ENCODE measurements at regions of chr1 and their contacts with region 1.

Region 1: GRCh38 chr1:168603501-168604110 is 27.2 kb downstream of the XCL1 start:
- DNase-seq: peak; percentile 54
- H3K4me3 ChIP-seq: no peak overlapping the region
- H3K27ac ChIP-seq: no peak overlapping the region
- H3K4me1 ChIP-seq: no peaks in the 10 kb centered on the region
- H3K27me3 ChIP-seq: no peaks in the 10 kb centered on the region
- CTCF ChIP-seq: peak; percentile 70 to 77
- POLR2A ChIP-seq: no peak

Region 2: GRCh38 chr1:168637350-168637991 is 33.9 kb after region 1 on chr1:
- CTCF ChIA-PET with region 1: interaction called, 18 read pairs
- POLR2A ChIA-PET with region 1: no interaction called
- dilution Hi-C with region 1: no loop called
- intact Hi-C with region 1: no loop called
- DNase-seq: peak; percentile 28
- H3K4me3 ChIP-seq: no peak overlapping the region
- H3K27ac ChIP-seq: no peak overlapping the region
- H3K4me1 ChIP-seq: no peaks in the 10 kb centered on the region
- H3K27me3 ChIP-seq: no peaks in the 10 kb centered on the region
- CTCF ChIP-seq: peak; percentile 67 to 74
- POLR2A ChIP-seq: no peak

Region 3: GRCh38 chr1:168653567-168653966 is 50.0 kb after region 1 on chr1:
- CTCF ChIA-PET with region 1: no interaction called
- POLR2A ChIA-PET with region 1: no interaction called
- dilution Hi-C with region 1: no loop called
- intact Hi-C with region 1: no loop called
- DNase-seq: no peak
- H3K4me3 ChIP-seq: no peak overlapping the region
- H3K27ac ChIP-seq: no peak overlapping the region
- H3K4me1 ChIP-seq: no peaks in the 10 kb centered on the region
- H3K27me3 ChIP-seq: peaks cover 0 to 3% of the 10 kb centered on the region in 2 experiments
- CTCF ChIP-seq: no peak
- POLR2A ChIP-seq: no peak

Region 4: GRCh38 chr1:168673974-168674683 is 70.5 kb after region 1 on chr1:
- CTCF ChIA-PET with region 1: no interaction called
- POLR2A ChIA-PET with region 1: no interaction called
- dilution Hi-C with region 1: no loop called
- intact Hi-C with region 1: no loop called
- DNase-seq: no peak
- H3K4me3 ChIP-seq: no peak overlapping the region
- H3K27ac ChIP-seq: no peak overlapping the region
- H3K4me1 ChIP-seq: no peaks in the 10 kb centered on the region
- H3K27me3 ChIP-seq: no peaks in the 10 kb centered on the region
- CTCF ChIP-seq: no peak
- POLR2A ChIP-seq: no peak

Region 5: GRCh38 chr1:169133801-169134502 is 530.3 kb after region 1 on chr1:
- CTCF ChIA-PET with region 1: interaction called, 9 read pairs
- POLR2A ChIA-PET with region 1: no interaction called
- dilution Hi-C with region 1: no loop called
- intact Hi-C with region 1: loop called (anchors 10 kb)
- DNase-seq: no peak
- H3K4me3 ChIP-seq: no peak overlapping the region
- H3K27ac ChIP-seq: no peak overlapping the region
- H3K4me1 ChIP-seq: peaks cover 8% of the 10 kb centered on the region
- H3K27me3 ChIP-seq: no peaks in the 10 kb centered on the region
- CTCF ChIP-seq: no peak
- POLR2A ChIP-seq: no peak

Region 6: GRCh38 chr1:169367486-169368405 is 764.1 kb after region 1 on chr1 and contains the starts of genes BLZF1 and NME7:
- CTCF ChIA-PET with region 1: interaction called, 17 read pairs
- POLR2A ChIA-PET with region 1: no interaction called
- dilution Hi-C with region 1: no loop called
- intact Hi-C with region 1: no loop called
- DNase-seq: peak; percentile 98
- H3K4me3 ChIP-seq: peak within 1 kb of the TSS; percentile 97 to 100 (median 98)
- H3K27ac ChIP-seq: peak within 1 kb of the TSS; percentile 96
- H3K4me1 ChIP-seq: peaks cover 19% of the 10 kb centered on the region
- H3K27me3 ChIP-seq: no peaks in the 10 kb centered on the region
- CTCF ChIP-seq: no peak
- POLR2A ChIP-seq: peak; percentile 84
- total RNA-seq, gene BLZF1: 19.7 and 21.2 TPM in 2 replicates
- total RNA-seq, gene NME7: 25.0 and 25.3 TPM in 2 replicates

Region 7: GRCh38 chr1:169509351-169509750 is 905.7 kb after region 1 on chr1:
- CTCF ChIA-PET with region 1: interaction called, 13 read pairs
- POLR2A ChIA-PET with region 1: no interaction called
- dilution Hi-C with region 1: no loop called
- intact Hi-C with region 1: no loop called
- DNase-seq: peak; percentile 35
- H3K4me3 ChIP-seq: no peak overlapping the region
- H3K27ac ChIP-seq: no peak overlapping the region
- H3K4me1 ChIP-seq: peaks cover 35% of the 10 kb centered on the region
- H3K27me3 ChIP-seq: no peaks in the 10 kb centered on the region
- CTCF ChIP-seq: no peak
- POLR2A ChIP-seq: no peak

Region 8: DNA sequence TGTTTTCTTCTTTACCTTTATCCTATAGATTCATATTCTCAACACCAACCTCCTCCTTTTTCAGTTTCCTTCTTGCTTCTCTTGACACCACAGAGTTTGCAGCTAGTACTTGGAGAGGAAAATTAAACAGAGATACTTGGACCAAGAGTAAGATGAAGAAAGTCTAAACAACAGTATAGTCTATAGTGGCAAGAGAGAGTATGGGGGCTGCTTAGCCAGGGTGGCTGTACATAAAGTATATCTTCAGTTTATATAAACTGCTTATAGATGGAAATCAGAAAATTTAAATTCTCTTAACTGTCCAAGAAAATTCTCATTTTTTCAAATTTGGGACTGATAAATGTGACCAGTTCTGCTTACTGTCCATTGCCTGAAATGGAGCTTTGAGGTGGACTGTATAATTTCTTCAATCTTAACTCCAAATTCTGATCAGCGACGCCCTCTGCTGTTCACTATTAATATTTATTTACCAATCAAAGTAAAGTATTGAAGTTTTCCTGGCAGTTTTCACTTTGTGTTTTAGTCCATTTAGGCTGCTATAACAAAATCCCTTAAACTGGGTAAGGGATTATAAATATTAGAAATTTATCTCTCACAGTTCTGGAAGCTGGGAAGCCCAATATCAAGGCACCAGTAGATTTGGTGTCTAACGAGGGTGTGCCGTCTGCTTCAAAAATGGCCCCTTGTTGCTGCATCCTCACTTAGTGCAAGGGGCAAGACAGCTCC is 1205.9 kb after region 1 on chr1:
- CTCF ChIA-PET with region 1: interaction called, 7 read pairs
- POLR2A ChIA-PET with region 1: no interaction called
- dilution Hi-C with region 1: no loop called
- intact Hi-C with region 1: loop called (anchors 5 kb)
- DNase-seq: peak; percentile 58
- H3K4me3 ChIP-seq: no peak overlapping the region
- H3K27ac ChIP-seq: no peak overlapping the region
- H3K4me1 ChIP-seq: no peaks in the 10 kb centered on the region
- H3K27me3 ChIP-seq: no peaks in the 10 kb centered on the region
- CTCF ChIP-seq: peak in 1 of 2 donors; percentile 23
- POLR2A ChIP-seq: no peak

Measured in endothelial cell of umbilical vein (primary cell).